Lower leg skin (tissue), 4 donors: ENCODE measurements at regions of chr11 and their contacts with region 1.

Region 1: GRCh38 chr11:60841797-60842667 is at the start of gene CCDC86:
- DNase-seq: peak; percentile 95 to 100
- H3K4me3 ChIP-seq: peak within 1 kb of the TSS; percentile 61
- CTCF ChIP-seq: no peak
- POLR2A ChIP-seq: no peak
- total RNA-seq, gene CCDC86: 19.2 to 43.8 (median 21.8) TPM

Region 2: DNA sequence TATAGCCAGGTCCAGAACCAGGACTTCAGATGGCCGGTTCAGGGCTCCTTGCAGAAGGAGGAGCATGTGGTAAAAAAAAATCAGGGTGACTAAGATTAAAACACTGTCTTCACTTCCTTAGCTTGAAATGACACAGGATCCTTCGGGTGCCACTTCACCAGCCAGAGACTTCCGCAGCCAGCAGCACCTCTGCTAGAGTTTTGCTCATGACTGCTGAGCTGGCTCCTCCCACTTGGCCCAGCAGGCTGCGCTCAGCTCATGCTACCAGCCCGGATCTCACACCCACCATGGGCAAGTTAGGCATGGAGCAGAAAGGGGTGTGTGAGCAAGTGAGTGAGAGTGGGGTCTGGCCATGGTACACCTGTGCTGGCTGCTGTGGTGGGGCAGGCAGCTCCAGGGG is 124.1 kb before region 1 on chr11:
- intact Hi-C with region 1: no loop called
- DNase-seq: no peak
- H3K4me3 ChIP-seq: no peak overlapping the region
- CTCF ChIP-seq: no peak
- POLR2A ChIP-seq: no peak

Region 3: GRCh38 chr11:60855726-60856633 is 13.9 kb after region 1 on chr11 and contains the start of gene PTGDR2:
- intact Hi-C with region 1: no loop called
- DNase-seq: no peak
- H3K4me3 ChIP-seq: no peak within 1 kb of the TSS
- CTCF ChIP-seq: no peak
- POLR2A ChIP-seq: no peak
- total RNA-seq, gene PTGDR2: 0.13 to 0.64 (median 0.32) TPM

Region 4: GRCh38 chr11:60880643-60881282 is 38.7 kb after region 1 on chr11:
- intact Hi-C with region 1: loop called (anchors 5 kb)
- DNase-seq: peak in 1 of 2 donors; percentile 36
- H3K4me3 ChIP-seq: no peak overlapping the region
- CTCF ChIP-seq: peak in 1 of 3 donors; percentile 64
- POLR2A ChIP-seq: no peak

Region 5: GRCh38 chr11:61129639-61130523 is 287.8 kb after region 1 on chr11:
- intact Hi-C with region 1: loop called (anchors 10 kb)
- DNase-seq: peak; percentile 80 to 97
- H3K4me3 ChIP-seq: no peak overlapping the region
- CTCF ChIP-seq: peak in 1 of 3 donors; percentile 98
- POLR2A ChIP-seq: no peak

Region 6: DNA sequence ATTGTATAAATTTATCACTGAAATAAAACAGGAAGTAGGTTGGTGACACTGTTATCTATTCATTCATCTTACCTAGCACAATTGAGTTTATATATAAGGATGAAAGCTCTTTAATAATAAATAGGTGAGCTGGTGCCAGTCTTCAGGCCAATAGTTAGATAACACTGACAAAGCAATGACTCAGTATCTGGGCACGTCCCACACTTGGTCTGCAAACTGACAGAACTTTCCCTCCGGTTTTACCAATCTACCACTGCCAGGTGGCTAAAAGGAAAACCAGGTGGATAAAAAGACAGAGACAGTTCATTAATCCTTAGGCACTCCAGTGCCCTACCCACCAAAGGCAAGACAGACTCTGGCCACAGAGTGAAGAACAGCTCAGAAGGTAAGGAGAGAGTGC is 473.2 kb after region 1 on chr11:
- intact Hi-C with region 1: no loop called
- DNase-seq: no peak
- H3K4me3 ChIP-seq: no peak overlapping the region
- CTCF ChIP-seq: no peak
- POLR2A ChIP-seq: no peak